ENCODE measurements at regions of chr14 and their contacts with region 1.

Region 1: DNA sequence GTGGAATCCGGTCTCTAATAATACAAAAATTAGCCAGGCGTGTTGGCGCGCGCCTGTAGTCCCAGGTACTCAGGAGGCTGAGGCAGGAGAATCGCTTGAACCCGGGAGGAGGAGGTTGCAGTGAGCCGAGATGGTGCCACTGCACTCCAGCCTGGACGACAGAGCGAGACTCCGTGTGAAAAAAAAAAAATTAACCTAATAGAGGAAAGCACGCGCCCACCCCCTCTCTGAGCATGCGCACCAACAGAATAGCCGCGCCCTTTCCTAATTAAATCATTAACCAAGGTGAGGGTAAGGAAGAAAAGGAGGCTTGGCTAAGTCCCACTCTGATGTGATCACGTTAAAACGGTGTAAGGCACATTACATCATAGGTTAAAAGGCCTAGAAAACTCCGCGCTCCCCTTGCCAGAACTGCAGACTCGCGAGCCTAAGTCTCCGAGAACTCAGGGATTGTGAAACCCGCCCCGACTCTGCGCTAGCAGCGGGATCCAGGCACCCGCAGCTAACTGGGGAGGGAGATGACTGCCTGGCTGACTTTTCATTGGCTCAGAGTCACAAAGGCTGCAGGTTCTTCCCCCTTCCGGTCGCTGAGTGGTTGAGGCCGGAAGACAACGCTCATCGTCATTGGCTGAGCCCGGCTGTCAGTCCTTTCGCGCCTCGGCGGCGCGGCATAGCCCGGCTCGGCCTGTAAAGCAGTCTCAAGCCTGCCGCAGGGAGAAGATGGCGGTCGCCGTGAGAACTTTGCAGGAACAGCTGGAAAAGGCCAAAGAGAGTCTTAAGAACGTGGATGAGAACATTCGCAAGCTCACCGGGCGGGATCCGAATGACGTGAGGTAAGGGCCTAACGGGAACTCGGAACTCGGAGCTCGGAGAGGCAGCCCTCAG is at the start of gene PNN:
- DNase-seq: peak; percentile 99
- H3K4me3 ChIP-seq: peak within 1 kb of the TSS; percentile 98
- H3K27ac ChIP-seq: peak within 1 kb of the TSS; percentile 93
- H3K4me1 ChIP-seq: peaks cover 41% of the 10 kb centered on the region
- CTCF ChIP-seq: no peak
- total RNA-seq, gene PNN: 93.5 and 137 TPM in 2 replicates

Region 2: GRCh38 chr14:39114073-39114838 is 60.5 kb before region 1 on chr14 and contains the start of gene GEMIN2:
- CTCF ChIA-PET with region 1: no interaction called
- POLR2A ChIA-PET with region 1: interaction called, 15 read pairs
- intact Hi-C with region 1: loop called (anchors 1 kb)
- DNase-seq: peak; percentile 98
- H3K4me3 ChIP-seq: peak within 1 kb of the TSS; percentile 89
- H3K27ac ChIP-seq: peak within 1 kb of the TSS; percentile 86
- H3K4me1 ChIP-seq: peaks cover 31% of the 10 kb centered on the region
- CTCF ChIP-seq: no peak
- total RNA-seq, gene GEMIN2: 53.4 and 72.0 TPM in 2 replicates

Region 3: DNA sequence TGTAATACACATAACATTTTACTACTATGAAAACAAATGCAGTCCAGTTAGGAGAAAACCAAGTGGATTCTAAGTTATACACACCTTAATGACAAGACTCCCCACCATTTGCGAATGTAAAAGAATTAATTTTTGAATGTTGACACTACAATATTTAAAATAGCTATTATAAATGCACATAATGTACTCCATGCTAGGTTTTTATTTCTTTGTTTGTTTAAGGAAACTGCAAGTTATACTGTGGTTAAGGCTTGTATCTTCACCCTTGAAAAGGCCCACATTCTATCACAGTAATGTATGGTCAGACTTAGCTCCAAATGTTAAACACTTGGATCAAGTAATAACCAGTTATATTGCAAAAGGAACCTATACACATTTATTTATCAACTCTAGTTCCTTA is 13.9 kb before region 1 on chr14:
- CTCF ChIA-PET with region 1: no interaction called
- POLR2A ChIA-PET with region 1: interaction called, 11 read pairs
- intact Hi-C with region 1: no loop called
- DNase-seq: no peak
- H3K4me3 ChIP-seq: no peak overlapping the region
- H3K27ac ChIP-seq: no peak overlapping the region
- H3K4me1 ChIP-seq: no peaks in the 10 kb centered on the region
- CTCF ChIP-seq: no peak

Region 4: DNA sequence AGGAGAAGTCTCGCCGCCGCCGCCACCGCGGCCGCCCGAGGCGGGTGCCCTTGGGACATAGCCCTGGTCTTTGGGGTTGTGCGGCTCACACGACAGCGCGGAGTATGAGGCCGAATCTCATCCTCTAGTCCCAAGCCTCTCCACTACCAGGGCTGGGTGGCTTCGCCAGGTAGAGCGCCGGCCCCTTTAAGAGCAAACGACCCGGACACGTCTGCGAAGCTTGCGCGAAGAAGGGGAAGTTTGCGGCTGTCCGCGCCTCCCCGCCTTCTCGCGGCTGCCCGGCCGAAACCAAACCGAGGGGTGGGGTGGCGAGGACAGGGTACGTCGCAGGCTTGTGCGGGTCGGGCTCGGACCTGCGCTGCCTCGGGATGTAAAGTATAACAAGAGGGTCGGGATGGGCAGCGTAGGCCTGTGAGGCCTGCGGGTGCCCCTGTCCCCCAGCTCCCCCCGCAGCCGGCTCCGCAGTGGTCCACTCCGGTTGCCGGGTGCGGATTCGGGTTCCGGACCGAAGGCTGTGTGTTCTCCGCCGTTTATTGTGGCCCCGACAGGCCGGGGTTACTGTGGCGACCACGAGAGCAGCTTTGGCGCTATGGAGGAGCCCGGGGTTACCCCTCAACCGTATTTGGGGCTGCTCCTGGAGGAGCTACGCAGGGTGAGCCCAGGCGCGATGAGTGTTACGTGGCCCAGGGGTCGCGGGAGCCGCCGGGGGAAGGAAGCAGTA is 92.2 kb after region 1 on chr14:
- CTCF ChIA-PET with region 1: interaction called, 3 read pairs
- POLR2A ChIA-PET with region 1: interaction called, 18 read pairs
- intact Hi-C with region 1: loop called (anchors 1 kb)
- DNase-seq: peak; percentile 95
- H3K4me3 ChIP-seq: peak overlapping the region; percentile 88
- H3K27ac ChIP-seq: peak overlapping the region; percentile 84
- H3K4me1 ChIP-seq: peaks cover 29% of the 10 kb centered on the region
- CTCF ChIP-seq: no peak

Region 5: DNA sequence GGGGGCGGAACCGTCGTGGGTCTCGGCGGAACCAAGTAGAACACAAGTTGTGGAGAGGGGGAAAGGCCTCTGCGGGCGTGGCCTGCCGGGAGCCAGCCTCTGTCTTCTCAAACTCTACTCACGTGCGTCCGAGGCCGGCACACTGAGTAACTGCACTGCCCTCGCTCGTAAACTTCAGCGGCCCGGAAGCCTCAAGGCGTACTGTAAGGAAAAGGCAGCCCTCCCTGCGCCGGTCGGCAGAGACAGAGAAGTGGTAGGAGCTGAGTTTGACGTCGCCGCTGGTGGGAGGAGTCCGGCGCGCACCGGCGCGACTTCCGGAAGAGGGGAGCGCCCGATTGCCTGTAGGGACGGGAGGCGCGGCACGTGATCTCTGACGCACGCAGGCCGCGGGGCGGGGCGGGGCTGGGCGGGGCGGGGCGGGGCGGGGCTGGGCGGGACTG is 257.4 kb after region 1 on chr14 and contains the start of gene FBXO33:
- CTCF ChIA-PET with region 1: no interaction called
- POLR2A ChIA-PET with region 1: no interaction called
- intact Hi-C with region 1: loop called (anchors 1 kb)
- DNase-seq: peak; percentile 96
- H3K4me3 ChIP-seq: peak within 1 kb of the TSS; percentile 90
- H3K27ac ChIP-seq: peak within 1 kb of the TSS; percentile 91
- H3K4me1 ChIP-seq: peaks cover 33% of the 10 kb centered on the region
- CTCF ChIP-seq: no peak
- total RNA-seq, gene FBXO33: 14.2 and 19.8 TPM in 2 replicates

Measured in OCI-LY7 (cell line).